Mammary epithelial cell (primary cell): ENCODE measurements at regions of chr6 and their contacts with region 1.

Region 1: DNA sequence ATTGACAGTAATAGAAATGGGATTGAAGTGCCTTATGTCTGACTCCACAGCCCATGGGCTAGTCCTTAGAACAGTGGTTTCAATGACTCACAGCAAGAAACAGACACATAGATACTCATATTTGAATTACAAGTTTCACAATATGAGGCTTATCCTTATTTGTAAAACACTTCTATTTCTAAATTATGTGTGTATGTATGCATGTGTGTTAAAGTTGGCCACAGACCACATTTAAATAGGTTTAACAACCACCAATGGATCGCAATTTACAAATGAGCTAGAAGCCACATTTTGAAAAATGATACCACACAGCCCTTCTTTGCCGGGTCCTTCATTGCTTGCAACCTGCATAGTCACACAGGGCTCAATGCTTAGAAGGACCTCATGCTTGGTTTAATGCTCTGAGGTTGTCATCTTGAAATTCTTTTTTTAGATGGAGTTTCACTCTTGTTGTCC is 157.8 kb upstream of the PREP start:
- DNase-seq: peak; percentile 90
- H3K4me3 ChIP-seq: no peak overlapping the region
- H3K27ac ChIP-seq: peak overlapping the region; percentile 60
- H3K4me1 ChIP-seq: peaks cover 12% of the 10 kb centered on the region
- H3K27me3 ChIP-seq: no peaks in the 10 kb centered on the region
- CTCF ChIP-seq: no peak

Region 2: GRCh38 chr6:105509506-105510331 is 50.9 kb before region 1 on chr6:
- CTCF ChIA-PET with region 1: no interaction called
- dilution Hi-C with region 1: no loop called
- in situ Hi-C with region 1: no loop called
- intact Hi-C with region 1: no loop called
- DNase-seq: no peak
- H3K4me3 ChIP-seq: no peak overlapping the region
- H3K27ac ChIP-seq: no peak overlapping the region
- H3K4me1 ChIP-seq: no peaks in the 10 kb centered on the region
- H3K27me3 ChIP-seq: no peaks in the 10 kb centered on the region
- CTCF ChIP-seq: no peak

Region 3: GRCh38 chr6:105522626-105523322 is 37.9 kb before region 1 on chr6:
- CTCF ChIA-PET with region 1: no interaction called
- dilution Hi-C with region 1: no loop called
- in situ Hi-C with region 1: no loop called
- intact Hi-C with region 1: loop called (anchors 2 kb)
- DNase-seq: peak; percentile 70
- H3K4me3 ChIP-seq: no peak overlapping the region
- H3K27ac ChIP-seq: peak overlapping the region; percentile 44
- H3K4me1 ChIP-seq: peaks cover 9% of the 10 kb centered on the region
- H3K27me3 ChIP-seq: no peaks in the 10 kb centered on the region
- CTCF ChIP-seq: no peak